Left ventricle myocardium superior (tissue), 1 donor: ENCODE measurements at regions of chr12 and their contacts with region 1.

Region 1: GRCh38 chr12:90695415-90695814 is 259.6 kb downstream of the CCER1 start:
- DNase-seq: no peak
- ATAC-seq: no peak

Region 2: DNA sequence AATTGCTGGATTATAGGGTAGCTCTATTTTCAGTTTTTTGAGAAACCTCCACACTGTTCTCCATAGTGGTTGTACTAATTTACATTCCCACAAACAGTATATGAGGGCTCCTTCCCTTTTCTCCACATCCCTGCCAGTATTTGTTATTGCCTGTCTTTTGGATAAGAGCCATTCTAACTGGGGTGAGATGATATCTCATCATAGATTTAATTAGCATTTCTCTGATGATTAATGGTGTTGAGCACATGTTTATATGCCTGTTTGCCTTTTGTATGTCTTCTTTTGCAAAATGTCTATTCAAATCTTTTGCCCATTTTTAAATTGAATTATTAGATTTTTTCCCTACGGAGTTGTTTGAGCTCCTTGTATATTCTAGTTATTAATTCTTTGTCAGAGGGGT is 125.7 kb before region 1 on chr12:
- intact Hi-C with region 1: no loop called
- DNase-seq: no peak
- ATAC-seq: no peak

Region 3: GRCh38 chr12:90801776-90802175 is 106.4 kb after region 1 on chr12:
- intact Hi-C with region 1: no loop called
- DNase-seq: no peak
- ATAC-seq: no peak

Region 4: GRCh38 chr12:90854136-90854689 is 158.8 kb after region 1 on chr12:
- intact Hi-C with region 1: loop called (anchors 10 kb)
- DNase-seq: no peak
- ATAC-seq: peak; percentile 48